Activated T-helper 2 cell treated with anti-CD3 and anti-CD28 coated beads, Interferon-gamma antibody, Interleukin-2, Interleukin-4, amounts not matched to agents 10 μg/mL and 5 μg/mL and 100 μg/mL, durations not matched to agents 14 hours and 24 hours and 36 hours (primary cell): ENCODE measurements at regions of chr7 and their contacts with region 1.

Region 1: DNA sequence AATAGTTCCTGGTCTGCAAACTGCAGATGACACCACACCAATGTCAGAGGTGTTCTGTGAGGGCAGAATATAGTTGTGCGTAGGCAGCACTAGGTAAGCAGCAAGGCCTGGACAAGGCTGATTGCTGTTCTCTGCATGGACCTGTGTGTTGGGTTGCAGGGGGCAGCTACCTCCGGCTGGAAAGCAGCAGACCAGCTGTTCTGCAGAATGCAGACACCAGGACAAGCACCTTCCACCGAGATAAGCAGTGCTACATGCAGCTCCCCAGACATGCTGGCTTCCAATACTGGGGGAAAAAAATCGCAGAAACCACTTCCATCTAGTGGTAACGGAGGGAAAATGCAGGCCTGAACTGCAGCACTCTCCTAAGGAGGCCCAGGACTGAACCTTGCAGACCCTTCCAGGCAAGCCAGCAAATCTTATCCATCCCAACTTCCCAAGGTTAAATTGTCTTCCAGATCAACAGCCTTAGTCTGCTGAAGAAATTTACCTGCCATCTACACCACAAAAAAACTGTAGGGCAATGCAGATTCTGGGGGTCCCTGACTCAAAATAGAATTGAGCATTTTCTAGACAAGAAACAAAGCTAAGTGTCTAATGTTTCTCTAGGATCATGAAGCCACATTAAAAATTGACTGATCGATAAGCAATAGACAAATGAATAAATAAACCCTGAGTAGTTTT is 50.5 kb upstream of the COBL start:
- DNase-seq: no peak
- H3K4me3 Mint-ChIP-seq: no peak overlapping the region
- H3K27ac Mint-ChIP-seq: no peak overlapping the region
- H3K4me1 Mint-ChIP-seq: no peaks in the 10 kb centered on the region
- H3K27me3 Mint-ChIP-seq: no peaks in the 10 kb centered on the region

Region 2: DNA sequence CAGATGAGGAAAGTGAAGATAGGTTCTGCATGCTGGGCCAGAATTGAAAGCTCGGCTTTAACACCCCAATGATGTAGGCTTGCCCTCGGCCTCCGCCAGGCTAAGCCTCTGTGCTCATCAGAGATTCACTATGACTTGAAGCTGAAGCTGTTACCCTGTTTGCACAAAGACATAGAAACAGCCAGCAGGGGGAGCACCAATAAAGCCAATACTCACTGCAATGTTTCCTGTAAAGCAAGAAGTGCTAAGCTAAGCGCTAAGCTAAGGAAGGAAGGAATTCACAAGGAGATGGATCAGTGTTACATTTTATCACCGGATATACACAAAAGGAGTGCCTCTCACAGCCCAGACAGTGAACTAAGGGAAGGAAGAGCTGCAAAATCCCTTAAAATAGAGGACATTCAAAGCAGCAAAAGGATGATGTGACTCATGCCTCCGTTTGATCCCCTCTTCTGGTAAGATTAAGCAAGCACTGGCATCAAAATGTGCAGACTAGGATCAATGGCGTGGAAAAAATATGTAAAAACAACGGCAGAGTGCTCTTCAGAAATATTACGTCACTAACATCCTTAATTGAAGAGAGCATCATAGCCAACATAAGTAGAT is 204.2 kb before region 1 on chr7:
- intact Hi-C with region 1: loop called (anchors 1 kb)
- DNase-seq: peak; percentile 57
- H3K4me3 Mint-ChIP-seq: no peak overlapping the region
- H3K27ac Mint-ChIP-seq: no peak overlapping the region
- H3K4me1 Mint-ChIP-seq: peaks cover 16% of the 10 kb centered on the region
- H3K27me3 Mint-ChIP-seq: peaks cover 39% of the 10 kb centered on the region

Region 3: GRCh38 chr7:51299391-51300133 is 67.5 kb before region 1 on chr7:
- intact Hi-C with region 1: no loop called
- DNase-seq: no peak
- H3K4me3 Mint-ChIP-seq: no peak overlapping the region
- H3K27ac Mint-ChIP-seq: no peak overlapping the region
- H3K4me1 Mint-ChIP-seq: no peaks in the 10 kb centered on the region
- H3K27me3 Mint-ChIP-seq: no peaks in the 10 kb centered on the region

Region 4: GRCh38 chr7:51569581-51569980 is 202.5 kb after region 1 on chr7:
- intact Hi-C with region 1: no loop called
- DNase-seq: no peak
- H3K4me3 Mint-ChIP-seq: no peak overlapping the region
- H3K27ac Mint-ChIP-seq: no peak overlapping the region
- H3K4me1 Mint-ChIP-seq: no peaks in the 10 kb centered on the region
- H3K27me3 Mint-ChIP-seq: no peaks in the 10 kb centered on the region